GM10248 (cell line): ENCODE measurements at regions of chr19 and their contacts with region 1.

Region 1: GRCh38 chr19:10388957-10389356 is 8.6 kb upstream of the TYK2 start:
- DNase-seq: peak; percentile 66
- CTCF ChIP-seq: peak; percentile 88

Region 2: DNA sequence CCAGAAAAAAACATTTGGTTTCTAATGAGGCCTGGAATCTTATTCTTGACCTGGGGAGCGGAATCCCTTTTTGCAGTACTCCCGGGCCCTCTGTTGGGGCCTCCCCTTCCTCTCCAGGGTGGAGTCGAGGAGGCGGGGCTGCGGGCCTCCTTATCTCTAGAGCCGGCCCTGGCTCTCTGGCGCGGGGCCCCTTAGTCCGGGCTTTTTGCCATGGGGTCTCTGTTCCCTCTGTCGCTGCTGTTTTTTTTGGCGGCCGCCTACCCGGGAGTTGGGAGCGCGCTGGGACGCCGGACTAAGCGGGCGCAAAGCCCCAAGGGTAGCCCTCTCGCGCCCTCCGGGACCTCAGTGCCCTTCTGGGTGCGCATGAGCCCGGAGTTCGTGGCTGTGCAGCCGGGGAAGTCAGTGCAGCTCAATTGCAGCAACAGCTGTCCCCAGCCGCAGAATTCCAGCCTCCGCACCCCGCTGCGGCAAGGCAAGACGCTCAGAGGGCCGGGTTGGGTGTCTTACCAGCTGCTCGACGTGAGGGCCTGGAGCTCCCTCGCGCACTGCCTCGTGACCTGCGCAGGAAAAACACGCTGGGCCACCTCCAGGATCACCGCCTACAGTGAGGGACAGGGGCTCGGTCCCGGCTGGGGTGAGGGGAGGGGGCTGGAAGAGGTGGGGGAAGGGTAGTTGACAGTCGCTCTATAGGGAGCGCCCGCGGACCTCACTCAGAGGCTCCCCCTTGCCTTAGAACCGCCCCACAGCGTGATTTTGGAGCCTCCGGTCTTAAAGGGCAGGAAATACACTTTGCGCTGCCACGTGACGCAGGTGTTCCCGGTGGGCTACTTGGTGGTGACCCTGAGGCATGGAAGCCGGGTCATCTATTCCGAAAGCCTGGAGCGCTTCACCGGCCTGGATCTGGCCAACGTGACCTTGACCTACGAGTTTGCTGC is 101.9 kb before region 1 on chr19 and contains the start of gene ICAM4:
- CTCF ChIA-PET with region 1: interaction called, 23 read pairs
- POLR2A ChIA-PET with region 1: no interaction called
- DNase-seq: peak; percentile 59
- CTCF ChIP-seq: no peak

Region 3: GRCh38 chr19:10292206-10292788 is 96.7 kb before region 1 on chr19:
- CTCF ChIA-PET with region 1: interaction called, 23 read pairs
- POLR2A ChIA-PET with region 1: no interaction called
- DNase-seq: peak; percentile 91
- CTCF ChIP-seq: no peak

Region 4: DNA sequence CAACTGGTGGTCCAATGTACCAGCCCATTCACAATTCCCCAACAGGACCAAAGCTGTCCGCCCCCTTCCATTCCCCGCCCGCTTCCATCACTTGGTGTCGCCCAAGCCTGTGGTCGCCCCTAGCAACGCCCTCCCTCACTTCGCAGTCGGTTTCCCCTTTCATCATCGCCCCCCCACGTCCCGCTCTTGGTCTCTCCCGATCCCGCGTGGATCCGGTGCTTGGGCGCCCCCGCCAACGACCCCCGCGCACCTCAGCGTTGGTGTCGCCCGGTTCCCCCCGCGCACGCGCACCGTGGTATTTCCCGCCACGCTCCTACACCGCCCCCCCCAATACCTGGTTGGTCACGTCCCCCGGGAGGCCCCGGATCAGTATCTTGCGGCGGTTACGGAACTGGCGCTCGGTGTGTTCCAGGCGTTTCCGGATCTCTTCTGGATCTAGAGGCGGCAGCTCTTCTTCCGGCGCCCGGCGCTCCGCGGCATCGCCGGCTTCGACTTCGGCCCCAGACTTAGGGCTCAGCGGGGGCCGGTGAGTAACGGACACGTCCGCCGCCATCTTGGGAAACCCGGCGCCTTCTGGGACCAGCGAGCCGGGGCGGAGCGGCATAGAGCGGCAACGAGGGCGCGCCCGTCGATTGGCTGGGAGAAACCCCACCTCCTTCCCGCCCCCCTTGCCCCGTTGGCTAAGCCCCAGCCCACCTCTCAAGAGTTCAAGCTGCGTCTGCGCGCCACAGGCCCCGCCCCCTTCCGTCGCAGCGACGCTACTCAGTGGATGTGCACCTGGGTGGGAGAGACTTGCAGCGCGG is 55.8 kb before region 1 on chr19 and contains the start of gene RAVER1:
- CTCF ChIA-PET with region 1: interaction called, 11 read pairs
- POLR2A ChIA-PET with region 1: no interaction called
- DNase-seq: peak; percentile 100
- CTCF ChIP-seq: no peak

Region 5: GRCh38 chr19:10374931-10375330 is 14.0 kb before region 1 on chr19:
- CTCF ChIA-PET with region 1: interaction called, 33 read pairs
- POLR2A ChIA-PET with region 1: no interaction called
- DNase-seq: no peak
- CTCF ChIP-seq: no peak

Region 6: DNA sequence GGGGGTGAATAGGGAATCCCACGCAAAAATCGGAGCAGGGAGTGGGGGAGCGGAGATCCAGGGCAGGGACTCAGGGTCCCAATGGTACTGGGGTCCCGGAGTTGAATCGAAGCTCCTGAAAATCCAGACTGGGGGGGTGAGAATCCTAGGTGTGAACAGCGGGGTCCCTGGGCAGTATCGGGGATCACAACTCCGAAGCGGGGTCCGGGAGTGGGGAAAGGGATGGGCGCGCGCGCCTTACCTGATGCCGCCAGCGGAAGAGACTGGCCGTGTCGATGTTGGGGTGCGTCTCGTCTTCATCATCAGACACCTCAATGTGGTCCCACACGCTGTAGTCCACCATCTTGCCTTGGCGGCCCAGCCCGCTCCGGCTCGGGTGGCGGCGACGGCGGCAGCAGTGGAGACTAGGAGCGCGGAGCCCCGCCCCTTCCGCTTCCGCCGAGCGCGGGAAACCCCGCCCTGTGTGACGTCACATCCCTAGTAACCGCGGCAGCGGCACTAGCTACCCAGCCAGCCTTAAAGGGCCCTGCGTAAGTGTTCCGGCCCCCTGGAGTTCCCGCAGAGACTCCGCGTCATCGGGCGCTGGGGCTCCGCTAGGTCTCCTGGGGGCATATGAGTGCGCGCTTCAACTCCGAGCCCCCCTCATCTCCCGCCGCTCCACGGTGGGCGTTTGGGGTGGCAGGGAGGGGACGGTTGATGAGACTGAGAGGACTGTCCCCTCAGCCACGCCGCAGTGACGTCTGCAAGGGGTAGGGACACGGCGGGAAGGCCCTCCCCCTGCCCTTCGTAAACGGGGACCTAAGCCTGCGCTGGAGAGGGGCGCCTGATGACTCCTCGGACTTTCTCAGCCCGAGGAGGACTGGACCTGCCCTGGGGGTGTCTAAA is 14.4 kb after region 1 on chr19 and contains the start of gene CDC37:
- CTCF ChIA-PET with region 1: interaction called, 108 read pairs
- POLR2A ChIA-PET with region 1: interaction called, 5 read pairs
- DNase-seq: peak; percentile 99
- CTCF ChIP-seq: no peak

Region 7: GRCh38 chr19:10416380-10417257 is 27.7 kb after region 1 on chr19:
- CTCF ChIA-PET with region 1: interaction called, 979 read pairs
- POLR2A ChIA-PET with region 1: no interaction called
- DNase-seq: peak; percentile 89
- CTCF ChIP-seq: peak; percentile 74

Region 8: DNA sequence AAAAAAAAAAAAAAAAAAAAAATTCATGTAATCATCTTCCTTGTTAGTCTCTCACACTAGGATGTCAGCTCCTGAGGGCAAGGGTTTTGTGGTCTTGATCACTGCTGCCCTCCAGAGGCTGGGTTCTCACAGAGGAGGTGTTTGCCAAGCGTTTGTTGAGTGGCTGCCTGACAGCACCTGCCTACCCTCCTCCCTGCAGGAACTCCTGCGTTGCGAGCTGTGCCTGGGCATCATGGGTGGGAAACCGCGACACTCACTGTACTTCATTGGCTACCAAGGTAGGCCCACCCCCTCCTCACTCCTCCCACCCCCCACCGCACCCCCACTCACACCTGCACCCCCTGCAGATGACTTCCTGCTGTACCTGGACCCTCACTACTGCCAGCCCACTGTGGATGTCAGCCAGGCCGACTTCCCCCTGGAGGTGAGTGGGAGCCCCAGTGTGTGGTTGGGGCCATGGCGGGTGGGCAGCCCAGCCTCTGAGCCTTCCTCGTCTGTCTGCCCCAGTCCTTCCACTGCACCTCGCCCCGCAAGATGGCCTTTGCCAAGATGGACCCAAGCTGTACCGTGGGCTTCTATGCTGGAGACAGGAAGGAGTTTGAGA is 162.8 kb after region 1 on chr19:
- CTCF ChIA-PET with region 1: no interaction called
- POLR2A ChIA-PET with region 1: no interaction called
- DNase-seq: no peak
- CTCF ChIP-seq: no peak

Region 9: GRCh38 chr19:10602330-10603083 is 213.6 kb after region 1 on chr19:
- CTCF ChIA-PET with region 1: no interaction called
- POLR2A ChIA-PET with region 1: no interaction called
- DNase-seq: peak; percentile 98
- CTCF ChIP-seq: no peak